Activated CD4-positive, alpha-beta memory T cell treated with anti-CD3 and anti-CD28 coated beads for 36 hours (primary cell): ENCODE measurements at regions of chr6 and their contacts with region 1.

Region 1: GRCh38 chr6:90393232-90393884 is 96.7 kb upstream of the BACH2 start:
- DNase-seq: peak; percentile 85
- H3K4me3 Mint-ChIP-seq: no peak overlapping the region
- H3K27ac Mint-ChIP-seq: peak overlapping the region; percentile 71
- H3K4me1 Mint-ChIP-seq: peaks cover 78% of the 10 kb centered on the region
- H3K27me3 Mint-ChIP-seq: no peaks in the 10 kb centered on the region

Region 2: GRCh38 chr6:90080876-90081481 is 312.4 kb before region 1 on chr6:
- CTCF ChIA-PET with region 1: no interaction called
- POLR2A ChIA-PET with region 1: no interaction called
- intact Hi-C with region 1: loop called (anchors 1 kb)
- DNase-seq: peak; percentile 94
- H3K4me3 Mint-ChIP-seq: peak overlapping the region; percentile 86
- H3K27ac Mint-ChIP-seq: peak overlapping the region; percentile 92
- H3K4me1 Mint-ChIP-seq: peaks cover 91% of the 10 kb centered on the region
- H3K27me3 Mint-ChIP-seq: no peaks in the 10 kb centered on the region

Region 3: DNA sequence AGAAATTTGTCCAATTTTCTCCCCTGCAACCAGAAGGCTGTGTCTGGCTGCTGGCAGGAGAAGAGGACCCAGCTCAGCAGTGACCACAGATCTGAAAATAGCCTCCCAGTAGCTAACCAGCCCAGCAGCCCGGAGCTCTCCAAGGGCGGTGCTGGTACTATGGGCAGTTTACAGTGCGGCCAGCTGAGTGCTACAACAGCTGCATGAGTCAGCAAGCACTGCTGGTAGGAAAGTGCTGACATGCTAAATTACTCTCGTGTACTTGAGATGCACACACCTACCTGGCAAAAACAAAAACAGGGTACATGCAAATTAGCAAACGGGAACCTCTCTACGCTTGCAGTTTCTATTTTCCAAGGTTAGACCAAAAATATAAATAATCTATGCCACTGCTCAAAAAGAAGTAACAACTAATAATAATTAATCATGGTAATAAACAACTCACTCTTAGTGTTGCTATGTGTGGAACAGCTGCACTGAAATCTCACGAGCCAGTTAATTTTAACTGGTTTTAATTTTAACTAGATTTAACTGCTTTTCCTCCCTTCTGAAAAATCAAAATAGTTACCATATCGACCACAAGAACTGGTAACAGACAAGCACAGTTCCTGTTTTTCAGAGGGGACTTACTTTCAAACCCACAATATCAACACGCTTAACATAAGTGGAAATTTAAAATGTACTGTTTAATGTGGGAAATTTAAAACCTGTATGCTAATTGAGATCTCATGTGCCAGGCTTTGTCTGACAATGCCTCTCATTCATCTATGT is 107.6 kb before region 1 on chr6:
- CTCF ChIA-PET with region 1: interaction called, 49 read pairs
- POLR2A ChIA-PET with region 1: interaction called, 52 read pairs
- intact Hi-C with region 1: loop called (anchors 1 kb)
- DNase-seq: peak; percentile 75
- H3K4me3 Mint-ChIP-seq: peak overlapping the region; percentile 67
- H3K27ac Mint-ChIP-seq: peak overlapping the region; percentile 89
- H3K4me1 Mint-ChIP-seq: peaks cover 91% of the 10 kb centered on the region
- H3K27me3 Mint-ChIP-seq: no peaks in the 10 kb centered on the region

Region 4: GRCh38 chr6:90350689-90351554 is 42.4 kb before region 1 on chr6:
- CTCF ChIA-PET with region 1: interaction called, 10 read pairs
- POLR2A ChIA-PET with region 1: interaction called, 7 read pairs
- intact Hi-C with region 1: loop called (anchors 1 kb)
- DNase-seq: peak; percentile 67
- H3K4me3 Mint-ChIP-seq: peak overlapping the region; percentile 31
- H3K27ac Mint-ChIP-seq: peak overlapping the region; percentile 85
- H3K4me1 Mint-ChIP-seq: peaks cover 44% of the 10 kb centered on the region
- H3K27me3 Mint-ChIP-seq: peaks cover under 1% of the 10 kb centered on the region

Region 5: DNA sequence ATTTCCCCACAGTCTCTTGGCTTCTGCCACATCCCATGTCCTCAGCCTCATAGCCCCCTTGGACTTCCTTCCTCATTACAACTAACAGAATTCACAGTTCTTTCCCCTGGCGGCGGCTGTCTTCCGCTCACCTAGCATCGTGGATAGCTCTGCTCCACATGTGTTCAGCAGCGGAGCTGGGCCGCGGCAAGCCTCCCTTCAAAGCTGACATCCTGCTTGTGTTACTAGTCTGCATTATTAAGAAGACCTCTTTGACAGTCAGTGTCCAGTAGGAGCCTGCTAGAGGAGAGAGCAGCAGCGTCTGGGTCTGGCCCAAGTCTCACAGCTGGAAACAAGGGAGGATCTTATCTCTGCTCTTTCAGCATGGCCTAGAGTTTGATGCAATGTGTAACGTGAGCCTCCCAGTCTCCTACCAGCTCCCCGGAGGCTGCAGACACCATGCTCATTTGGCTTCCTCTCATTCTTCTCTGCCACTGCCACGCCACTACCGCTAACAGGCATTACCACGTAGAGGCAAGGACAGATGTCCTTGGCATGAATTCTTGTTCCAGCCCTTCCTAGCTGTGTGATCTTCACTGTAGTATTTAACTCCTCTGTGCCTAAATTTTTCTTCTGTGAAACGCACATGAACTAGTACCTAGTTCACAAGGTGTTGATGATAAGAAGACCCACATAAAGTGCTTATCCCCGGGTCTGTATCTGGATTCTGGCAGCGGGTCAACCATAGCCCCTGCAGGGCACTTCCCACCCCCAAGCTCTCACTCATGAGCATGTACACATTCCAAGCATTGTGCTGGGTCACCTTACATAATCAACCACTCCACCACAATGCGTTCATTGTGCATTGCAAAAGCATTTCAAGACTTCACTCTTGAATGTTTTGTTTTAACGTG is 10.4 kb after region 1 on chr6:
- CTCF ChIA-PET with region 1: interaction called, 13 read pairs
- POLR2A ChIA-PET with region 1: interaction called, 25 read pairs
- intact Hi-C with region 1: loop called (anchors 1 kb)
- DNase-seq: no peak
- H3K4me3 Mint-ChIP-seq: peak overlapping the region; percentile 64
- H3K27ac Mint-ChIP-seq: peak overlapping the region; percentile 93
- H3K4me1 Mint-ChIP-seq: peaks cover 81% of the 10 kb centered on the region
- H3K27me3 Mint-ChIP-seq: no peaks in the 10 kb centered on the region

Region 6: GRCh38 chr6:90458353-90459224 is 65.2 kb after region 1 on chr6:
- CTCF ChIA-PET with region 1: interaction called, 15 read pairs
- POLR2A ChIA-PET with region 1: interaction called, 98 read pairs
- intact Hi-C with region 1: loop called (anchors 1 kb)
- DNase-seq: peak; percentile 94
- H3K4me3 Mint-ChIP-seq: peak overlapping the region; percentile 40
- H3K27ac Mint-ChIP-seq: peak overlapping the region; percentile 95
- H3K4me1 Mint-ChIP-seq: peaks cover 87% of the 10 kb centered on the region
- H3K27me3 Mint-ChIP-seq: no peaks in the 10 kb centered on the region